ENCODE measurements at regions of chr16 and their contacts with region 1.

Region 1: DNA sequence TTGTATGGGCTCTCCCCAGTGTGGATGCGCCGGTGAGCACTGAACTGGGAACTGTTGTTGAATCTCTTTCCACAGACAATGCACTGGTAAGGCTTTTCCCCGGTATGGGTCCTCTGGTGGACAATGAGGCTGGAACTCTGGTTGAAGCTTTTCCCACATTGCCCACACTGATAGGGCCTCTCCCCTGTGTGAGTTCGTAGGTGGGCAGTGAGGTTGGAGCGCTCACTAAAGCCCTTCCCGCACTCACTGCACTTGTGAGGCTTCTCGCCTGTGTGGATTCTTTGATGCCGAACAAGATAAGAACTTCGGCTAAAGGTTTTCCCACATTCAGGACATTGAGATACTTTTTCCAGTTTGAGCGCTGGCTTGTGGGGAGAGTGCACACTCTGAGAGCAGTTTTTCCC is 17.8 kb downstream of the ZSCAN32 start:
- DNase-seq: no peak
- H3K4me3 ChIP-seq: peak overlapping the region in 1 of 8 donors; percentile 40
- H3K27ac ChIP-seq: no peak overlapping the region
- H3K4me1 ChIP-seq: no peaks in the 10 kb centered on the region
- H3K27me3 ChIP-seq: no peaks in the 10 kb centered on the region
- CTCF ChIP-seq: no peak
- POLR2A ChIP-seq: no peak

Region 2: GRCh38 chr16:3198334-3199072 is 184.5 kb before region 1 on chr16:
- intact Hi-C with region 1: no loop called
- DNase-seq: no peak
- H3K4me3 ChIP-seq: no peak overlapping the region
- H3K27ac ChIP-seq: no peak overlapping the region
- H3K4me1 ChIP-seq: no peaks in the 10 kb centered on the region
- H3K27me3 ChIP-seq: peaks cover under 1 to 77% (median 34%) of the 10 kb centered on the region in 7 donors
- CTCF ChIP-seq: no peak
- POLR2A ChIP-seq: no peak

Region 3: DNA sequence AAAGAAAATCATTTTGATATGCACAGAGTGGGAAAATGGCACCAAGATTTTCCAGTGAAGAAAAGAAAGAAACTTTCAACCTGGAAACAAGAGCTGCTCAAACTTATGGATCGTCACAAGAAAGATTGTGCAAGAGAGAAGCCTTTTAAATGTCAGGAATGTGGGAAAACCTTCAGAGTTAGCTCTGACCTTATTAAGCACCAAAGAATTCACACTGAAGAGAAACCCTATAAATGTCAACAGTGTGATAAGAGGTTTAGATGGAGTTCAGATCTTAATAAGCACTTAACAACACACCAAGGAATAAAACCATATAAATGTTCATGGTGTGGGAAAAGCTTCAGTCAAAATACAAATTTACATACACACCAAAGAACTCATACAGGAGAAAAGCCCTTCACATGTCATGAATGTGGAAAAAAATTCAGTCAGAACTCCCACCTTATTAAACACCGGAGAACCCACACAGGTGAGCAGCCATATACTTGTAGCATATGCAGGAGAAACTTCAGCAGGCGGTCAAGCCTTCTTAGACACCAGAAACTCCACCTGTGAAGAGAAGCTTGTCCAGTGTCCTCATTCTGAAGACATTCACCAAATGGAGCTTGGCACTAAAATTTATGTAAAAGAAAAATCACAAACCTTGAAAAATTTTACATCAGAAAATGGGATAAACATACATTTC is 65.6 kb before region 1 on chr16:
- intact Hi-C with region 1: loop called (anchors 10 kb)
- DNase-seq: no peak
- H3K4me3 ChIP-seq: no peak overlapping the region
- H3K27ac ChIP-seq: no peak overlapping the region
- H3K4me1 ChIP-seq: no peaks in the 10 kb centered on the region
- H3K27me3 ChIP-seq: no peaks in the 10 kb centered on the region
- CTCF ChIP-seq: no peak
- POLR2A ChIP-seq: no peak